ENCODE measurements at regions of chr15 and their contacts with region 1.

Region 1: DNA sequence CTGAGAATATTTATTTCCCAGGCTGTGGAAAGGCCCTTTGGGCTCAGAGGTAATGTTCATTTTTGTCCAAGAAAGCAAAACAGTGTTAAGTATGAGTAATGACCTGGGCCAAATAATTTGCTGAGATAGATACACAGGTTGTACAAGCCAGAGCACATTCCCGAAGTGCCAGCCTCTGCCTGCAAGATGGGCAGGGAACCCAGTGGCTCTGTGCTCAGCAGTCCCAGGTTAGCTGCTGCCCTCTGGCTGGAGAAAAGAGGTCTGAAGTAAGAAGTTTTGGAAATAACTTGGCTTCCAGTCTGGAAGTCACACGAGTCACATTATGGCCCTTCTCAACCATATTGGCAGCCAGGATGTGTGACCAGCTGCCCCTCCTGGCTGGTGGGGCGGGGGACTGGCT is 20.2 kb downstream of the MYZAP start:
- DNase-seq: peak in 1 of 2 donors; percentile 88
- H3K4me3 ChIP-seq: no peak overlapping the region
- H3K27ac ChIP-seq: peak overlapping the region; percentile 85
- H3K4me1 ChIP-seq: peaks cover 57% of the 10 kb centered on the region
- H3K27me3 ChIP-seq: no peaks in the 10 kb centered on the region
- CTCF ChIP-seq: peak in 1 of 3 experiments; percentile 49
- POLR2A ChIP-seq: no peak

Region 2: DNA sequence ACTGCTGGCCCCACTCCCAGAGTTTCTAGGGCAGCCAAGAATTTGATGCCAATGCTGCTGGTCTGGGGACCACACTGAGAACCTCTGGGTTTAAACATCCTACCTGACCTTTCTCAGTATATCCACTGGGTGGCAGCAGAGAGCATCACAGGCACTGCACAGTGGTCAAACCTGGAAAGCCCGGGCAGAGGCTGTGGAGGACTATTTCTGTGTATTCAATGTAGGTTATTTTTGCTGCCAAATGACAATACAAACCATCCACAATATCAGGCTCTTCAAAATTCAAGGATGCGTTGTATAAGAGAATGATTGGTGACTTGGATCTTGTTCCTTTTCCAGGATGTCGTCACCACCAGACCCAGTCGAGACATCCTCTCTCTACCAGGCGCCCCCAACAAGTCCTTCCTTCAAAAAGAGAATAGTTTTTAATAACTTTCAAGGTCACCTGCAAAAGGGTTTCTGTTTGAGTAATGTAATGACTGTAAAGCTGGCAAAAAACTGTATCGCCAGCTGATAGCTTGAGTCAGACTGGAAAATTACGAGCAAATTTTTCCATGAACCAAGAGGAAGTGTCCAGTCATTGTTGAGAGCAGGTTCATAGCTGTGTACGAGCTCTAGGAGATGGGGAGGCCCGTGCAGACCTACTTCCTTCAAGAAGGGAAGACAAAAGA is 50.8 kb before region 1 on chr15:
- intact Hi-C with region 1: loop called (anchors 10 kb)
- DNase-seq: no peak
- H3K4me3 ChIP-seq: no peak overlapping the region
- H3K27ac ChIP-seq: no peak overlapping the region
- H3K4me1 ChIP-seq: peaks cover 15% of the 10 kb centered on the region
- H3K27me3 ChIP-seq: no peaks in the 10 kb centered on the region
- CTCF ChIP-seq: peak; percentile 67 to 88 (median 88)
- POLR2A ChIP-seq: no peak